Mucosa of descending colon (tissue), 3 donors: ENCODE measurements at regions of chr6 and their contacts with region 1.

Region 1: DNA sequence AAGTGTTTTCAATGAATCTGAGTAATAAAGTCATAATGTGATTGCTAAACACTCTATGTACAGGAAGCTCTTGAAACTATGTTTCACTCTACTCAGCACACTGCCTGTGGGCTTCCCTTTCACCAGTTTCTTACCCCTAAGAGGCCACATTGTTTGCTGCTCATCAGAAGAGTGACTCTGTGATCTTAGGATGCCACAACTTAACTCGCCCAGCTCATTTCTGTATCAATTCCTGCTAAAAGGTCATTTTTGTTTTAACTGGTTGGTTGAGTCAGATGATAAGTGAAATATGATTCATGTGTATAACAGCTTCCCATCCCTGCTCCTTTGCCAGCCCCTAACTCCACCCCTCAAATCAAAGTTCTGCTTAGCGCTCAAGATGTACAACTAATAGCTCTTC is 9.8 kb upstream of the NDUFAF4 start:
- DNase-seq: no peak
- ATAC-seq: no peak
- H3K4me3 ChIP-seq: no peak overlapping the region
- H3K4me1 ChIP-seq: no peaks in the 10 kb centered on the region
- CTCF ChIP-seq: no peak

Region 2: GRCh38 chr6:96990462-96990861 is 83.0 kb after region 1 on chr6:
- intact Hi-C with region 1: no loop called
- DNase-seq: no peak
- ATAC-seq: no peak
- H3K4me3 ChIP-seq: no peak overlapping the region
- H3K4me1 ChIP-seq: no peaks in the 10 kb centered on the region
- CTCF ChIP-seq: no peak

Region 3: DNA sequence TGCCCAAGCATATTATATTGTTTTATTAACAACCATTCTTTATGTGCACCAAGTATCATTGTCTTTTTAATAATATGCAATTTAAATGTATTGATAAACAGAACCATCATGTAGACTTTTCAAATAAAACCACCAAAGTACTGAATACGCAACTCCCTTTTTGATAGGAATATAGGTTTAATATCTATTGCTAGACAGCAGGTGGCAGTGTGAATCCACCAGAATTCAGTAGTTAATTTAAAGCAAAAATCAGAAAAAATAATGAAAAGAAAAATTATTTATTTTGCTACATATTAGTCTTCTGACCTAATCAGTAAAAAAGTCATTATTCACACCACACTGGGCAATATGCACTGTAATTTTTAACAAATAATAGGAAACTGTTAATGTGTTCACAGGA is 160.7 kb after region 1 on chr6:
- intact Hi-C with region 1: loop called in 1 of 2 experiments (anchors 10 kb)
- DNase-seq: no peak
- ATAC-seq: no peak
- H3K4me3 ChIP-seq: no peak overlapping the region
- H3K4me1 ChIP-seq: no peaks in the 10 kb centered on the region
- CTCF ChIP-seq: no peak